Caco-2 (cell line): ENCODE measurements at regions of chr5 and their contacts with region 1.

Region 1: GRCh38 chr5:57082441-57083067 is 91.3 kb upstream of the GPBP1 start:
- DNase-seq: peak in 1 of 2 experiments; percentile 46
- H3K4me3 ChIP-seq: no peak overlapping the region
- H3K4me3 Mint-ChIP-seq: no peak overlapping the region
- H3K27ac Mint-ChIP-seq: no peak overlapping the region
- H3K4me1 ChIP-seq: no peaks in the 10 kb centered on the region
- H3K4me1 Mint-ChIP-seq: no peaks in the 10 kb centered on the region
- H3K27me3 ChIP-seq: no peaks in the 10 kb centered on the region
- H3K27me3 Mint-ChIP-seq: no peaks in the 10 kb centered on the region
- CTCF ChIP-seq: peak; percentile 55 to 73

Region 2: DNA sequence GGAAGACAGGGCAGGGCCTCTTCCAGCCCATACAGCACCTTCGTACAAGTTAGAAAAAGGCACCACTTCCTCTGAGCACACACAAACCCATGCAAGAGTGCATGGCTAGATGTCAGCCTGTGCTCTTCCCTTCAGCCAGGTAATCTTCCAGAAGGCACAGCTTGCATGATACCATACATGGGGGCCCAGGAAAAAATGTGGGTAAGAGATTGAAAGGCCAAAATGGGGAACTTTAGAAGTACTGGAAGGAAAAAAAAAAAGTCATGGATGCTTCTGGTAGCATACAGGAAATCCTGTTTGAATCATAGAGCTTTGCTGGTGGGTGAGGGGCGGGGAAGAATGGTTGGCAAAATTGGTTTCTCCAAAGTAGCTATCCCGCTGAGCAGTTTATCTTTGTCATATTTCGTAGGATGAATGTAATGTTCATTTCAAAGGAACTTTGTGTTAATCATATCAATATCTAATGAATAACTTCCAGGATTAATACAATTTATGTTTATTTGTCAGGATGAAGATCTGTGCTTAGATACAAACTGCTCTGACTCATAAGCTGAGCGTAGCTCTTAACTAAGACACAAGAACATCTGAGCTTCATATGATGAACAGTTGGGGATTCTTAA is 345.4 kb before region 1 on chr5:
- CTCF ChIA-PET with region 1: no interaction called
- POLR2A ChIA-PET with region 1: no interaction called
- intact Hi-C with region 1: no loop called
- DNase-seq: no peak
- H3K4me3 ChIP-seq: no peak overlapping the region
- H3K4me3 Mint-ChIP-seq: no peak overlapping the region
- H3K27ac Mint-ChIP-seq: no peak overlapping the region
- H3K4me1 ChIP-seq: no peaks in the 10 kb centered on the region
- H3K4me1 Mint-ChIP-seq: peaks cover 15% of the 10 kb centered on the region
- H3K27me3 ChIP-seq: no peaks in the 10 kb centered on the region
- H3K27me3 Mint-ChIP-seq: no peaks in the 10 kb centered on the region
- CTCF ChIP-seq: no peak

Region 3: GRCh38 chr5:56791396-56791795 is 291.2 kb before region 1 on chr5:
- CTCF ChIA-PET with region 1: no interaction called
- POLR2A ChIA-PET with region 1: no interaction called
- intact Hi-C with region 1: no loop called
- DNase-seq: no peak
- H3K4me3 ChIP-seq: no peak overlapping the region
- H3K4me3 Mint-ChIP-seq: no peak overlapping the region
- H3K27ac Mint-ChIP-seq: no peak overlapping the region
- H3K4me1 ChIP-seq: no peaks in the 10 kb centered on the region
- H3K4me1 Mint-ChIP-seq: no peaks in the 10 kb centered on the region
- H3K27me3 ChIP-seq: no peaks in the 10 kb centered on the region
- H3K27me3 Mint-ChIP-seq: no peaks in the 10 kb centered on the region
- CTCF ChIP-seq: no peak

Region 4: DNA sequence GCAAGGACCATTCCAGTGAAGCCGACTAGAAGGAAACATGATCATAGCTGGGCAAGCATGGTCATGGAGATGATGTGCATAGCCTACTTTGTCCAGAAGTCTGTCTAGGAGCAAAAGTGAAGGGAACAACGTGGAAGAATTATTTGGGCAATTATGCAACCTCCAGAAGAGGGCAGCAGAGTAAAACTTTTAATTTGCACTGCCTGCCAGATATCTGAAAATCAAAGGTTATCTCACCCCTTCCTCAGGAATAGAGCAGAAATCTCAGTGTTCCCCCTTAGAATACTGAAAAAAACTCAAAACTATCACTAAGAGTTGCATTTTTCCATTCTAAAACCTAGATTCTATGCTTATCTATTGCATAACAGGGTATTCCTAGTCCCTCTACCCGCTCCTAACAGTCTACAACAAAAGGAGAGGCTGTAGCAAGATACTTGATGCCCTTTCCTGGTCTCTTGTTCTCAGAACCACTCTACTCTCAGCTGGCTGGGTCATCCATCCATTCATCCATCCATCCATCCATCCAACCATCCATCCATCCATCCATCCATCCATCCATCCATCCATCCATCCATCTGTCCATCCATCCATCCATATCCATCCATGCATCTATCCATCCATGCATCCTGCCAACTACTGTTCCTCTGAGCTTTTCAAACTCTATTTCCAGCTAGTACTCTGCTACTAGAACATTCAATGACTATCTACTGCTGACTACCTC is 181.5 kb before region 1 on chr5:
- CTCF ChIA-PET with region 1: no interaction called
- POLR2A ChIA-PET with region 1: no interaction called
- intact Hi-C with region 1: loop called (anchors 1 kb)
- DNase-seq: peak in 1 of 2 experiments; percentile 71
- H3K4me3 ChIP-seq: no peak overlapping the region
- H3K4me3 Mint-ChIP-seq: no peak overlapping the region
- H3K27ac Mint-ChIP-seq: no peak overlapping the region
- H3K4me1 ChIP-seq: peaks cover 5% of the 10 kb centered on the region; the same call in 1 of the 2 replicates
- H3K4me1 Mint-ChIP-seq: no peaks in the 10 kb centered on the region
- H3K27me3 ChIP-seq: no peaks in the 10 kb centered on the region
- H3K27me3 Mint-ChIP-seq: no peaks in the 10 kb centered on the region
- CTCF ChIP-seq: peak; percentile 66 to 80

Region 5: GRCh38 chr5:56909294-56910209 is 173.0 kb before region 1 on chr5 and contains the start of gene SETD9:
- CTCF ChIA-PET with region 1: interaction called, 3 read pairs
- POLR2A ChIA-PET with region 1: no interaction called
- intact Hi-C with region 1: loop called (anchors 1 kb)
- DNase-seq: peak; percentile 97 to 99
- H3K4me3 ChIP-seq: peak within 1 kb of the TSS; percentile 85
- H3K4me3 Mint-ChIP-seq: peak within 1 kb of the TSS; percentile 96
- H3K27ac Mint-ChIP-seq: peak within 1 kb of the TSS; percentile 94
- H3K4me1 ChIP-seq: no peaks in the 10 kb centered on the region
- H3K4me1 Mint-ChIP-seq: no peaks in the 10 kb centered on the region
- H3K27me3 ChIP-seq: no peaks in the 10 kb centered on the region
- H3K27me3 Mint-ChIP-seq: no peaks in the 10 kb centered on the region
- CTCF ChIP-seq: no peak
- total RNA-seq, gene SETD9: 10.5 and 13.1 TPM in 2 replicates

Region 6: DNA sequence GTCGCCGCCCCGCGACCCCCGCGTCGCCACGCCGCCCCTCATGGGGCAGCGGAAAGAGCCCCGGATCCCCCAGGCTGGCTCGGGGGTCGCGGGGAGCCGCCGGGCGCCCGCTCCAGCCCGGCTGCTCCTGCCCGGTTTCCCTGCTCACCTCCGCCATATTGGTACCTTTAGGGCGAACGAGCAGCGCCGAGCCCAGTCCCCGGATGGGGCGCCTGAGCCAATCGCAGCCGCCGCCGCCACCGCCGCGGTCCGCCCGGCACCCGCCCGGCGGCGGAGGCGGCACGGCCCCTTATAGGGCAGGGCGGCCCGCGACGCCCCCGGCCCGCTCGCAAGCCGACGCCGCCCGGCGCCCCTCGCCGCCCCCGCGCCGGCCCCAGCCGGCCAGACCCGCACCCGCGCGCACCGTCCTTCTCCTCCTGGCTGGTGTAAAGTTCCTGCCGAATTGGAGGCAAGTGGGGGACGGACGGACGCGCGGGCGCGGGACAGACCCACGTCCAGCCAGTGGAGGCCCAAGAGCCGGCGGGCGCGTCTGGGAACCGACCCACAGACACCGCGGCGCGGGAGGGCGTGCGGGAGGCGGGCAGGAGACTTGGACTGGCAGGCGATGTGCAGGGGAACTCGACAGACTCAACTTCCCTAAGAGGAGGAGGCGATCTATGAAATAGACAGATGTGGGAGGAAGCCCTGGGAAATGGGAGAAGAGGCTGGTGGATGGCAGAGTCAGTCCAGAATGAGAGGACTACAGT is 130.4 kb before region 1 on chr5 and contains the start of gene MIER3:
- CTCF ChIA-PET with region 1: no interaction called
- POLR2A ChIA-PET with region 1: no interaction called
- intact Hi-C with region 1: loop called (anchors 1 kb)
- DNase-seq: peak; percentile 81 to 90
- H3K4me3 ChIP-seq: peak within 1 kb of the TSS; percentile 94
- H3K4me3 Mint-ChIP-seq: peak within 1 kb of the TSS; percentile 73
- H3K27ac Mint-ChIP-seq: peak within 1 kb of the TSS; percentile 72
- H3K4me1 ChIP-seq: peaks cover 25% of the 10 kb centered on the region
- H3K4me1 Mint-ChIP-seq: peaks cover 11% of the 10 kb centered on the region
- H3K27me3 ChIP-seq: no peaks in the 10 kb centered on the region
- H3K27me3 Mint-ChIP-seq: no peaks in the 10 kb centered on the region
- CTCF ChIP-seq: no peak
- total RNA-seq, gene MIER3: 52.7 and 54.0 TPM in 2 replicates

Region 7: GRCh38 chr5:56983593-56984361 is 98.8 kb before region 1 on chr5:
- CTCF ChIA-PET with region 1: no interaction called
- POLR2A ChIA-PET with region 1: no interaction called
- intact Hi-C with region 1: no loop called
- DNase-seq: peak; percentile 76 to 79
- H3K4me3 ChIP-seq: no peak overlapping the region
- H3K4me3 Mint-ChIP-seq: no peak overlapping the region
- H3K27ac Mint-ChIP-seq: no peak overlapping the region
- H3K4me1 ChIP-seq: peaks cover 30% of the 10 kb centered on the region
- H3K4me1 Mint-ChIP-seq: peaks cover 23% of the 10 kb centered on the region
- H3K27me3 ChIP-seq: no peaks in the 10 kb centered on the region
- H3K27me3 Mint-ChIP-seq: no peaks in the 10 kb centered on the region
- CTCF ChIP-seq: no peak

Region 8: GRCh38 chr5:56995596-56995995 is 87.0 kb before region 1 on chr5:
- CTCF ChIA-PET with region 1: no interaction called
- POLR2A ChIA-PET with region 1: no interaction called
- intact Hi-C with region 1: loop called (anchors 5 kb)
- DNase-seq: no peak
- H3K4me3 ChIP-seq: no peak overlapping the region
- H3K4me3 Mint-ChIP-seq: no peak overlapping the region
- H3K27ac Mint-ChIP-seq: no peak overlapping the region
- H3K4me1 ChIP-seq: no peaks in the 10 kb centered on the region
- H3K4me1 Mint-ChIP-seq: no peaks in the 10 kb centered on the region
- H3K27me3 ChIP-seq: no peaks in the 10 kb centered on the region
- H3K27me3 Mint-ChIP-seq: no peaks in the 10 kb centered on the region
- CTCF ChIP-seq: no peak

Region 9: DNA sequence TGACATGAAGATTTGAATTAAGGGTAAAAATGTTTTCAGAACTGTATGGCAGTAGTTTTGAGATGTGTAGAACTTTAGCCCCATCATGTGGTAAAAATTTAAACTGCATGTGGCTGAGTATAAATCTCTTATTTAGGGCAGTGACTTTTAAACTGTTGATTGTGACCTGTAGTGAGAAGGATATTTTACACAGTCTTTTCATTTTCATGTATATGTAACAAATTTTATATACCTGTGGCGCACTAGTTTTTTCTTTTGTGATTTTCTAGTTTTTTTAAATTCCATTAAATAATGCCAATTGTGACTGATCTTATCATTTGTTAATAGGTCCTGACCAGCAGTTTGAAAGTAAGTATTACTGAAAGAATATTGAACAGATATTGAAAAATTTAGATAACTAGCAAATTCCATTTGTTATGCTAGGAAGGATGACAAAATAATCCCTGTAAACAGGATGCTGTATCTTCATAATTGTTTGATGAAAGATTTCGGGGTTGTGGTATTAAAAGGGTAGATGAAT is 138.6 kb after region 1 on chr5:
- CTCF ChIA-PET with region 1: no interaction called
- POLR2A ChIA-PET with region 1: no interaction called
- intact Hi-C with region 1: loop called (anchors 1 kb)
- DNase-seq: peak in 1 of 2 experiments; percentile 69
- H3K4me3 ChIP-seq: no peak overlapping the region
- H3K4me3 Mint-ChIP-seq: no peak overlapping the region
- H3K27ac Mint-ChIP-seq: no peak overlapping the region
- H3K4me1 ChIP-seq: peaks cover 6% of the 10 kb centered on the region; the same call in 1 of the 2 replicates
- H3K4me1 Mint-ChIP-seq: no peaks in the 10 kb centered on the region
- H3K27me3 ChIP-seq: no peaks in the 10 kb centered on the region
- H3K27me3 Mint-ChIP-seq: no peaks in the 10 kb centered on the region
- CTCF ChIP-seq: peak; percentile 66 to 84